ENCODE measurements at regions of chr5 and their contacts with region 1.

Region 1: DNA sequence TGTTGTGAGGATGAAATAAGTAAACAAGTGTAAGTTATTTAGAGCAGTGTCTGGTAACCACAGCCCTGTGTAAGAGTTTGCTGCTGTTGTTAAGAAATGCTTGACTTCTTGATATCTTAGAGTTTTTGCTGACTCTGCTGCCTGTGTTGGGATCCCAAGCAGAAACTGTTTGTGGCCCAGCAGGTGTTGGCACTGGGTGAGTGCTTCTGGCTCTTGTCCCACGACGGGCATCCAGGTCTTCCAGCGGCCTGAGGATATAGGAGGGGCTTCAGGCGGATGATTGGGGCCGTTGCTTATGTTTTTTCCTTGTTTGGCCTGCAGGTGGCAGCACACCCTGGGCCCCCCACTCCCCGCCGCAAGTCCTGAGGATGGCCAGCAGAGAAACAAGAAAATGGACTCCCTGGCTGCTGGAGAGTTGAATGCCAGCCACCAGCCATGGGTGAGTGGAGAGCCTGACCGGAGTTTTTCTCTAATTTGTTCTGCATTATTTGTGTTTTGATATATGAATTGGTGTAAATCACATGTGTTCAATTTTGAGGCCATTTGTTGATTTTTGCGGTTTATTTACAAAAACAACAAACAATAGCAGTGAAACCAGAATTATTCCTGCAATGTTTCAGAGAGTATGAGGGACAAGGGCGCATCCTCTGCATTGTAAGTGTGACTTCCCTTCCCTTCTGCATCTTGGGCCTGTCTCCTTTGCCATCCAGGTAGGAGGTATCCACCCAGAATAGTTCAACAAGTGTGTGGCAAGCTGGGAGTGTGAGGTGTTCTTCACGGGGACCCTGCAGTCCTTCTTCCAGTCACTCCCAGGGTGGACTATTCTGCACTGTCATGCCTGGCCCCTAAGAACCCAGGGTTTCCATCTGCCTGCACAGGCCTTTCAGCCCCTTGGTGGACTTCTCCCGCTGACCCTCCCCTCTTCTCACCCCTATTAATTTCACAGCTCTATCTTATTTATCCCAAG is 50.3 kb downstream of the SLC22A5 start:
- DNase-seq: peak; percentile 69 to 83
- ATAC-seq: peak; percentile 59 to 78 (median 72)
- H3K4me3 ChIP-seq: no peak overlapping the region
- H3K27ac ChIP-seq: peak overlapping the region; percentile 66
- H3K4me1 ChIP-seq: peaks cover 93% of the 10 kb centered on the region
- H3K27me3 ChIP-seq: no peaks in the 10 kb centered on the region
- CTCF ChIP-seq: peak; percentile 80

Region 2: GRCh38 chr5:132386644-132387286 is 33.0 kb before region 1 on chr5:
- intact Hi-C with region 1: loop called in 1 of 2 experiments (anchors 5 kb)
- DNase-seq: peak; percentile 69 to 79
- ATAC-seq: peak; percentile 57 to 72 (median 68)
- H3K4me3 ChIP-seq: no peak overlapping the region
- H3K27ac ChIP-seq: peak overlapping the region; percentile 59
- H3K4me1 ChIP-seq: peaks cover 39% of the 10 kb centered on the region
- H3K27me3 ChIP-seq: no peaks in the 10 kb centered on the region
- CTCF ChIP-seq: peak; percentile 63

Region 3: DNA sequence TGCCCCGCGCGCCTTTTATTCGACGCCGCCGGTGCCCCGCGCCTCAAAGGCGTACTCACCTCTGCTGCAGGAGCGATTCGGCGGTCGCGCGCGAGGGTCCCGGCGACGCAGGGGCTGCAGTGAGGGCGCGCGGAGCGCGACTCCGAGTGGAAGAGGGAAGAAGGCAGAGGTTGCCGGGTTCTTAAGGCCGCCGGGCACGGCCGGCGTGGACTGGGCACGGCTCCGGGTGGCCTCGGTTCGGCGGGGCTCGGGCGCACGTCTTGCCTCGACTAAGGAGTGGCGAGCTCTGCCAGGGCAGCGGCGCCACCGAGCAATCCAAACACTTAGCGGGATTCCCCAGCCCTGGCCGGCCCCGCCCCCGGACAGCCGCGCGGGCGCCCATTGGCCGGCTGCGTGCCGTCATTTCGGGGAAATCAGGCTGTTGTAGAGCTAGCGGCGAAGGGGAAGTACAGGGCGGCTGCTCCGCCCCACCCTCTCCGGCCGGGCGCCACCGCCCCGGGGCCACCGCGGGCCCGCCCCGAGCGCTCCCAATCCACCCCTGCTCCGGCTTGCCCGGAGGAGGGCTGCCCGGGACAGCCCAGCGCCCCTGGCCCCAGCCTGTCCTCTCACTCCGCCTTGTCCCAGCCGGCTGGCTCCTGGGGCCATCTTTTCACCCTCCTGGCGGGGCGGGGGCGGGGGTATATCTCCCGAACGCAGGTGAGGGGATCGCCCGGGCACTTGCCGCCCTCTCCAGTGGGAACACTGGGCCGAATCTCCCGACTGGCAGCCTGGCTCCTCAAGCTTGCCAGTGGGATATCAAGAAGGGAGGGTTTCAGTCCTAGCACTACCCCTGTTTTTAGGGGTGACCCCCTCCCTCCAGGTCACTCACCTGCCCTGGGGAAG is 70.9 kb after region 1 on chr5 and contains the start of gene IRF1:
- intact Hi-C with region 1: loop called (anchors 2 kb)
- DNase-seq: peak; percentile 97 to 98
- ATAC-seq: peak; percentile 93 to 96 (median 95)
- H3K4me3 ChIP-seq: peak within 1 kb of the TSS; percentile 75
- H3K27ac ChIP-seq: peak within 1 kb of the TSS; percentile 89
- H3K4me1 ChIP-seq: peaks cover 20% of the 10 kb centered on the region
- H3K27me3 ChIP-seq: no peaks in the 10 kb centered on the region
- CTCF ChIP-seq: peak; percentile 3
- total RNA-seq, gene IRF1: 5.5 to 18.8 (median 13.7) TPM